A673 (cell line): ENCODE measurements at regions of chr2 and their contacts with region 1.

Region 1: GRCh38 chr2:239979243-239980023 is 45.7 kb downstream of the NDUFA10 start:
- DNase-seq: no peak
- H3K4me3 ChIP-seq: no peak overlapping the region
- H3K27ac ChIP-seq: no peak overlapping the region
- H3K4me1 ChIP-seq: no peaks in the 10 kb centered on the region
- H3K27me3 ChIP-seq: no peaks in the 10 kb centered on the region
- CTCF ChIP-seq: no peak

Region 2: GRCh38 chr2:239035361-239036078 is 943.9 kb before region 1 on chr2:
- CTCF ChIA-PET with region 1: no interaction called
- POLR2A ChIA-PET with region 1: no interaction called
- intact Hi-C with region 1: loop called (anchors 10 kb)
- DNase-seq: peak; percentile 55
- H3K4me3 ChIP-seq: peak overlapping the region; percentile 25
- H3K27ac ChIP-seq: no peak overlapping the region
- H3K4me1 ChIP-seq: no peaks in the 10 kb centered on the region
- H3K27me3 ChIP-seq: peaks cover 27% of the 10 kb centered on the region
- CTCF ChIP-seq: peak; percentile 83

Region 3: GRCh38 chr2:239953418-239954061 is 25.9 kb before region 1 on chr2:
- CTCF ChIA-PET with region 1: no interaction called
- POLR2A ChIA-PET with region 1: no interaction called
- intact Hi-C with region 1: no loop called
- DNase-seq: no peak
- H3K4me3 ChIP-seq: no peak overlapping the region
- H3K27ac ChIP-seq: no peak overlapping the region
- H3K4me1 ChIP-seq: no peaks in the 10 kb centered on the region
- H3K27me3 ChIP-seq: no peaks in the 10 kb centered on the region
- CTCF ChIP-seq: no peak

Region 4: DNA sequence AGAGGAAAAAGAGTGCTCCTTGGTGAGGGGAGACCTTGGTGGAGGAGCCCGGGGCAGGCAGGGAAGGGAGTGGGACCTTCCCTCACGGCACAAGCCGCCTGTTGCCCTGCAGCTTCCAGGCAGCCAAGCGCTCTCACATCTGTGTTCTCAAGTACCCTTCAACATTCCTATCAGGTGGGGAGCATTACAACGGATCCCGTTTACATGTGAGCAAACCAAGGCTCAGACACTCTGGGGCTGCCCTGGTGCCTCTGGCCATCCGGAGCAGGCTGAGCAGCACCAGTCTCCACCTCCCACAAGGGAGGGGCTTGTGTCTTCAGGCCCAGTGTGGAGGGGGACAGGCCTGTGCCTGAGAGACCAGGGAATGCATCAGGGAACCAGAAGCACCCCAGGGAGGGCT is 770.1 kb after region 1 on chr2:
- CTCF ChIA-PET with region 1: no interaction called
- POLR2A ChIA-PET with region 1: no interaction called
- intact Hi-C with region 1: no loop called
- DNase-seq: no peak
- H3K4me3 ChIP-seq: no peak overlapping the region
- H3K27ac ChIP-seq: no peak overlapping the region
- H3K4me1 ChIP-seq: no peaks in the 10 kb centered on the region
- H3K27me3 ChIP-seq: no peaks in the 10 kb centered on the region
- CTCF ChIP-seq: no peak